Endothelial cell of umbilical vein (primary cell): ENCODE measurements at regions of chr10 and their contacts with region 1.

Region 1: GRCh38 chr10:13882112-13882711 is 295.4 kb downstream of the PRPF18 start:
- DNase-seq: peak; percentile 96
- H3K4me3 ChIP-seq: no peak overlapping the region
- H3K27ac ChIP-seq: peak overlapping the region; percentile 99
- H3K4me1 ChIP-seq: peaks cover 71% of the 10 kb centered on the region
- H3K27me3 ChIP-seq: no peaks in the 10 kb centered on the region
- CTCF ChIP-seq: no peak
- POLR2A ChIP-seq: peak; percentile 68

Region 2: DNA sequence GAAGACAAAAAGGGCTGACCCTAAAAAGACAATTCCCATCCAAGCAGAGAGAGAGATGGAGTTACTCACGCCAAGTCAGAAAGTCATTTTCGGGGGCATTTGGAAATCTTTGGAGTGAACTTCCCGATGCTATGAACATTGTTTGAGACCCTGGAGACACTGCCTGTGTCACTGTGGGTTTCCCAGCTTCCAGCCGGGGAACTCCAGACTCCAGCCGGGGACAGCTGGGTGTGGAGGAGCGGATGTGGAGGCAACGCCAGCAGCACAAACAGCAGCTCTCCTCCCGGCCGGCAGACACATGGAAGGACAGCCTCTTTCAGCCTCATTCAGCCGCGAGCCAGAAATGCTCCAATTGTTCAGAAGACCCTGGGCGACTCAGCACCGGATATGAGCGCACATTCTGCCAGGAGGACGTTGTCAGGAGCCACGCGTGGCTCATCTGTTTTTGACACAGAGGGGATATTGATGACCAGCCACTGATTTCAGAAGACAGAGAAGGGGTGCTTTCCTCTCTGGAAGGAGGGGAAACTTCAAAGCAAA is 197.9 kb before region 1 on chr10:
- CTCF ChIA-PET with region 1: no interaction called
- POLR2A ChIA-PET with region 1: no interaction called
- dilution Hi-C with region 1: no loop called
- intact Hi-C with region 1: no loop called
- DNase-seq: peak; percentile 93
- H3K4me3 ChIP-seq: no peak overlapping the region
- H3K27ac ChIP-seq: peak overlapping the region; percentile 100
- H3K4me1 ChIP-seq: peaks cover 47% of the 10 kb centered on the region
- H3K27me3 ChIP-seq: no peaks in the 10 kb centered on the region
- CTCF ChIP-seq: no peak
- POLR2A ChIP-seq: no peak

Region 3: DNA sequence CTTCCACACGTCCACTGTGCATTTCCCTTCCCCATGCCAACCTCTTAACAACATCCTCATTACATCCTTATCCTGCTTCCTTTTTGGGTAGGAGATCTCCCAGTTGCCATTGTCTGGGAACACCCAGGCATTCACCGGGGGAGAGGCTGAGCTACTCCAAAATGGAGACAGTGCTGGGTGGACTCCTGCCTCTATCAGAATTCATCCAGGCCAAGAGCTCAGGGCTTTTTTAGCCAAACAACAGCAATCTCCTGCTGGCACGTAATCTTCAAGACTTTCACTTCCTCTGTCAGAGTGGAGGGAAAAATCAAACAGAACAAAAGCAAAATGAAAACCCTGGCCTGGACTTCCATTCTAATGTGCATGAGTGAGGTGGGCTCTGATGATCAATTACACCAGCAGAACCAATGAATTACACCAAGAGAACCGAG is 50.5 kb before region 1 on chr10:
- CTCF ChIA-PET with region 1: interaction called, 5 read pairs
- POLR2A ChIA-PET with region 1: interaction called, 4 read pairs
- dilution Hi-C with region 1: no loop called
- intact Hi-C with region 1: loop called (anchors 1 kb)
- DNase-seq: peak; percentile 76
- H3K4me3 ChIP-seq: no peak overlapping the region
- H3K27ac ChIP-seq: peak overlapping the region; percentile 75
- H3K4me1 ChIP-seq: peaks cover 42% of the 10 kb centered on the region
- H3K27me3 ChIP-seq: no peaks in the 10 kb centered on the region
- CTCF ChIP-seq: no peak
- POLR2A ChIP-seq: no peak

Region 4: DNA sequence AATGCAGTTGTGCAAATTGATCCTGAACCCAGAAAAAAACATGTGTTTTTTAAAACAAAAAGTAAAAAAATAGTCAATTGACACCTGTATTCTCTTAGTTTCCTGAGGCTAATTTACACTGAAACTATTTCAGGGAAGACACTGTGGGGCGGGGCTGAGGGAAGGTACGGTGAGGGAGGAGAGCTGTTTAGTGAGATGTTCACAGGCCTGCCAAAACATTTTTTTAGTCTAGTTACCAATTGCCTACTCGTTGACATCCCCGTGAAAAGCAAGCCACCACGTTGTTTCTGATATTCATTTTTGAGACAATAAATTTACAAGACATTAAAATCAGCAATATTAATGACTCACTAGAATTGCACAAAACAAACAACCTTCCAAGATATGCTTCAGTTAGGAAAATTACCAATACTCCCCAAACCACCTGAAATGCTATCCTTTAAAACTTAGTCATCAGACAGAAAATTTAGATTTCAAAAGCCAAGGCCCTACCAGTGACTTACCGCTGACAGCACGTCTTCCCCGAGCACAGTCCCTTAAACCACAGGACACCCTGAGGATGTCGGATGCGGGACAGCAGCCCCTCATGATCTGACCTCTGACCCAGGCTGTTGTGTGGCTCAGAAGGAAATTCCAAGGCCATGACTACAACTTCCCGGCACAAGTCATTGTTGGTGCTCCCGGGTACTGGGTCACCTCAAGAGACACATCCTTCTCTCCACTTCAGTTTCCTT is 16.3 kb before region 1 on chr10:
- CTCF ChIA-PET with region 1: interaction called, 7 read pairs
- POLR2A ChIA-PET with region 1: interaction called, 3 read pairs
- dilution Hi-C with region 1: no loop called
- intact Hi-C with region 1: loop called (anchors 1 kb)
- DNase-seq: peak; percentile 89
- H3K4me3 ChIP-seq: peak overlapping the region in 1 of 3 experiments; percentile 37
- H3K27ac ChIP-seq: peak overlapping the region; percentile 96
- H3K4me1 ChIP-seq: peaks cover 64% of the 10 kb centered on the region
- H3K27me3 ChIP-seq: no peaks in the 10 kb centered on the region
- CTCF ChIP-seq: no peak
- POLR2A ChIP-seq: no peak

Region 5: GRCh38 chr10:13949844-13950595 is 67.8 kb after region 1 on chr10:
- CTCF ChIA-PET with region 1: no interaction called
- POLR2A ChIA-PET with region 1: no interaction called
- dilution Hi-C with region 1: no loop called
- intact Hi-C with region 1: loop called (anchors 1 kb)
- DNase-seq: peak; percentile 22
- H3K4me3 ChIP-seq: no peak overlapping the region
- H3K27ac ChIP-seq: no peak overlapping the region
- H3K4me1 ChIP-seq: peaks cover 33% of the 10 kb centered on the region
- H3K27me3 ChIP-seq: no peaks in the 10 kb centered on the region
- CTCF ChIP-seq: no peak
- POLR2A ChIP-seq: no peak

Region 6: DNA sequence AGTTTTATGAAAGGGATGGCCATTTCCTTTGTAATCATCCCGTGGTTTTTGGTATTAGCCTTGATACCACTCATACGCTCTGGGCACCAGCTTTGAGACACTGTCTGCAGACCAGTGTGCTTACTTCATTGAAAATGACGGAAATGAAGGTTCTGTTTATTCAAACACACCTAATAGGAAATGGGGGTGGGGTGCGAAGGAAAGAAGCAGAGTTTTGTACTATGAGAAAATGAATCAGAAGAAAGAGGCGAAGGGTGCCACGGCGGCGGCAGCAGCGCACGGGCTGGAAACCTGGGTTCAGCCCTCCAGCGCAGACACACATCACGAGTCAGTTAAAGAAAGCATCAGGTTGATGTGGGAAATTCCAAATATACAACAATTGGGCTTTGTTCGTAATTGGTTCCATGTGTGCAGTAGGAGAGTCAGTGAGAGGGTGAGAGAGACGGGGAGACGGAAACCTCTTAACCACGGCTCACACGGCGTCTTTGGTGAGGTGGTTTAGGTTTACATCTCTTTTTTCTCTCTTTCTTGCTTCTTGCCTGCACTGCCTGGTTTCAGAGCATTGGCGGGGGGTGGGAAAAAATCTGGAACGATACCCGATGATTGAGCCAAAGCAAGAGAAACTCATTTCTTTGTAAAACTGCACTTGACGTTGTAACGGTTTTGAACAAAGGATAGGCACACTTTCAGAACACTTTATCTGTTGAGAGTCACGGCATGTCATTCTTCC is 127.3 kb after region 1 on chr10:
- CTCF ChIA-PET with region 1: no interaction called
- POLR2A ChIA-PET with region 1: no interaction called
- dilution Hi-C with region 1: no loop called
- intact Hi-C with region 1: loop called (anchors 2 kb)
- DNase-seq: peak; percentile 47
- H3K4me3 ChIP-seq: peak overlapping the region; percentile 1 to 79 (median 26)
- H3K27ac ChIP-seq: peak overlapping the region; percentile 93
- H3K4me1 ChIP-seq: peaks cover 39% of the 10 kb centered on the region
- H3K27me3 ChIP-seq: no peaks in the 10 kb centered on the region
- CTCF ChIP-seq: no peak
- POLR2A ChIP-seq: no peak

Region 7: GRCh38 chr10:14093730-14094484 is 211.7 kb after region 1 on chr10:
- CTCF ChIA-PET with region 1: interaction called, 17 read pairs
- POLR2A ChIA-PET with region 1: no interaction called
- dilution Hi-C with region 1: no loop called
- intact Hi-C with region 1: no loop called
- DNase-seq: peak; percentile 68
- H3K4me3 ChIP-seq: no peak overlapping the region
- H3K27ac ChIP-seq: no peak overlapping the region
- H3K4me1 ChIP-seq: peaks cover 6% of the 10 kb centered on the region
- H3K27me3 ChIP-seq: no peaks in the 10 kb centered on the region
- CTCF ChIP-seq: peak; percentile 41 to 45
- POLR2A ChIP-seq: no peak